ENCODE measurements at regions of chr17 and their contacts with region 1.

Region 1: GRCh38 chr17:10844621-10845387 is 6.9 kb upstream of the PIRT start:
- DNase-seq: peak; percentile 60 to 66 (median 64)
- H3K4me3 ChIP-seq: peak overlapping the region in 1 of 2 donors; percentile 50
- H3K4me3 Mint-ChIP-seq: peak overlapping the region; percentile 75 to 89 (median 83)
- H3K27ac ChIP-seq: no peak overlapping the region
- H3K27ac Mint-ChIP-seq: peak overlapping the region in 2 of 7 donors; percentile 9 to 44
- H3K4me1 ChIP-seq: peaks cover 7% of the 10 kb centered on the region
- H3K4me1 Mint-ChIP-seq: peaks cover 2 to 12% (median 8%) of the 10 kb centered on the region in 4 donors
- H3K27me3 ChIP-seq: no peaks in the 10 kb centered on the region
- H3K27me3 Mint-ChIP-seq: peaks cover 6 to 17% of the 10 kb centered on the region in 2 donors

Region 2: GRCh38 chr17:9924735-9925191 is 920.0 kb before region 1 on chr17:
- CTCF ChIA-PET with region 1: no interaction called
- POLR2A ChIA-PET with region 1: no interaction called
- intact Hi-C with region 1: loop called (anchors 10 kb)
- DNase-seq: peak in 4 of 5 donors; percentile 26 to 45 (median 38)
- H3K4me3 ChIP-seq: no peak overlapping the region
- H3K4me3 Mint-ChIP-seq: no peak overlapping the region
- H3K27ac ChIP-seq: no peak overlapping the region
- H3K27ac Mint-ChIP-seq: peak overlapping the region in 1 of 7 donors; percentile 82
- H3K4me1 ChIP-seq: no peaks in the 10 kb centered on the region
- H3K4me1 Mint-ChIP-seq: peaks cover 2 to 6% (median 3%) of the 10 kb centered on the region in 4 donors
- H3K27me3 ChIP-seq: no peaks in the 10 kb centered on the region
- H3K27me3 Mint-ChIP-seq: no peaks in the 10 kb centered on the region

Region 3: GRCh38 chr17:10631048-10631700 is 213.6 kb before region 1 on chr17:
- CTCF ChIA-PET with region 1: interaction called, 29 read pairs
- POLR2A ChIA-PET with region 1: no interaction called
- intact Hi-C with region 1: no loop called
- DNase-seq: peak in 1 of 5 donors; percentile 33
- H3K4me3 ChIP-seq: no peak overlapping the region
- H3K4me3 Mint-ChIP-seq: peak overlapping the region in 1 of 8 donors; percentile 45
- H3K27ac ChIP-seq: no peak overlapping the region
- H3K27ac Mint-ChIP-seq: no peak overlapping the region
- H3K4me1 ChIP-seq: no peaks in the 10 kb centered on the region
- H3K4me1 Mint-ChIP-seq: peaks cover 0 to 6% (median 4%) of the 10 kb centered on the region in 4 donors
- H3K27me3 ChIP-seq: no peaks in the 10 kb centered on the region
- H3K27me3 Mint-ChIP-seq: no peaks in the 10 kb centered on the region

Region 4: GRCh38 chr17:10697092-10698081 is 147.4 kb before region 1 on chr17 and contains the starts of genes ADPRM and SCO1:
- CTCF ChIA-PET with region 1: no interaction called
- POLR2A ChIA-PET with region 1: no interaction called
- intact Hi-C with region 1: loop called (anchors 1 kb)
- DNase-seq: peak; percentile 86 to 91 (median 87)
- H3K4me3 ChIP-seq: peak within 1 kb of the TSS; percentile 80 to 95
- H3K4me3 Mint-ChIP-seq: peak within 1 kb of the TSS; percentile 91 to 98 (median 97)
- H3K27ac ChIP-seq: peak within 1 kb of the TSS; percentile 96
- H3K27ac Mint-ChIP-seq: peak within 1 kb of the TSS; percentile 91 to 98 (median 94)
- H3K4me1 ChIP-seq: peaks cover 55% of the 10 kb centered on the region
- H3K4me1 Mint-ChIP-seq: peaks cover 37 to 71% (median 54%) of the 10 kb centered on the region in 4 donors
- H3K27me3 ChIP-seq: no peaks in the 10 kb centered on the region
- H3K27me3 Mint-ChIP-seq: no peaks in the 10 kb centered on the region
- total RNA-seq, gene ADPRM: 45.5 to 46.7 TPM
- total RNA-seq, gene SCO1: 26.0 to 26.1 TPM

Region 5: GRCh38 chr17:10737168-10737622 is 107.6 kb before region 1 on chr17:
- CTCF ChIA-PET with region 1: interaction called, 27 read pairs
- POLR2A ChIA-PET with region 1: no interaction called
- intact Hi-C with region 1: no loop called
- DNase-seq: peak in 4 of 5 donors; percentile 10 to 30 (median 18)
- H3K4me3 ChIP-seq: no peak overlapping the region
- H3K4me3 Mint-ChIP-seq: peak overlapping the region in 6 of 8 donors; percentile 6 to 68 (median 51)
- H3K27ac ChIP-seq: no peak overlapping the region
- H3K27ac Mint-ChIP-seq: peak overlapping the region in 4 of 7 donors; percentile 8 to 72 (median 20)
- H3K4me1 ChIP-seq: no peaks in the 10 kb centered on the region
- H3K4me1 Mint-ChIP-seq: peaks cover 4 to 12% (median 8%) of the 10 kb centered on the region in 4 donors
- H3K27me3 ChIP-seq: no peaks in the 10 kb centered on the region
- H3K27me3 Mint-ChIP-seq: peaks cover 7 to 8% of the 10 kb centered on the region in 2 donors

Region 6: GRCh38 chr17:10920558-10921108 is 75.8 kb after region 1 on chr17:
- CTCF ChIA-PET with region 1: no interaction called
- POLR2A ChIA-PET with region 1: no interaction called
- intact Hi-C with region 1: no loop called
- DNase-seq: no peak
- H3K4me3 ChIP-seq: no peak overlapping the region
- H3K4me3 Mint-ChIP-seq: no peak overlapping the region
- H3K27ac ChIP-seq: no peak overlapping the region
- H3K27ac Mint-ChIP-seq: no peak overlapping the region
- H3K4me1 ChIP-seq: no peaks in the 10 kb centered on the region
- H3K4me1 Mint-ChIP-seq: no peaks in the 10 kb centered on the region
- H3K27me3 ChIP-seq: no peaks in the 10 kb centered on the region
- H3K27me3 Mint-ChIP-seq: peaks cover under 1 to 3% of the 10 kb centered on the region in 2 donors